ENCODE measurements at regions of chr3 and their contacts with region 1.

Region 1: GRCh38 chr3:63961891-63962290 is 49.7 kb upstream of the SCAANT1 start:
- DNase-seq: no peak
- ATAC-seq: peak in 2 of 8 donors; percentile 47 to 55
- H3K4me3 ChIP-seq: no peak overlapping the region
- H3K27ac ChIP-seq: no peak overlapping the region
- H3K4me1 ChIP-seq: peaks cover 0 to 60% (median 44%) of the 10 kb centered on the region in 9 donors
- H3K27me3 ChIP-seq: no peaks in the 10 kb centered on the region
- CTCF ChIP-seq: peak; percentile 46 to 72 (median 60)

Region 2: DNA sequence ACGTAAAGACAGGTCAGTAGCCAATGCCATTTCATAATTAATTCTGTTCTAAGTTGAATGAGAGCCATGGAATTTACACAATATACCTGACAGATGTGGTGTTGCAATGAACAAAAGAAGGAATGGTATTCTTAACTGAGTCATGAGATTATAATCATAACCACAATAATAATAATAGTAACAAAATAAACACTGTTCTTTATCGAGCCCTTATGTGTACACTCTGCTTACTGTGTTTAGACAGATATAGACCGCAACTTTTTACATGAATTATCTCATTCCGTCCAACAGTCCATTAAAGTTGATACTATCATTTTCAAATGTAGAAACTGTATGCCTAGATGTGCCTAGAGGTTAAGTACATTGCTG is 21.5 kb before region 1 on chr3:
- intact Hi-C with region 1: loop called in 1 of 10 experiments (anchors 1 kb)
- DNase-seq: no peak
- ATAC-seq: no peak
- H3K4me3 ChIP-seq: no peak overlapping the region
- H3K27ac ChIP-seq: no peak overlapping the region
- H3K4me1 ChIP-seq: peaks cover 0 to 63% (median 25%) of the 10 kb centered on the region in 9 donors
- H3K27me3 ChIP-seq: no peaks in the 10 kb centered on the region
- CTCF ChIP-seq: no peak

Measured in heart right ventricle (tissue), 16 donors.